SK-N-SH (cell line): ENCODE measurements at regions of chr2 and their contacts with region 1.

Region 1: GRCh38 chr2:101831351-101831865 is 133.9 kb downstream of the MAP4K4 start:
- DNase-seq: peak; percentile 54
- H3K4me3 ChIP-seq: no peak overlapping the region; a peak in 1 of 4 replicates
- H3K27ac ChIP-seq: peak overlapping the region; percentile 65 to 77
- H3K4me1 ChIP-seq: peaks cover 11 to 21% of the 10 kb centered on the region in 2 experiments
- H3K27me3 ChIP-seq: no peaks in the 10 kb centered on the region
- CTCF ChIP-seq: peak; percentile 84
- EP300 ChIP-seq: no peak
- RAD21 ChIP-seq: peak; percentile 81

Region 2: DNA sequence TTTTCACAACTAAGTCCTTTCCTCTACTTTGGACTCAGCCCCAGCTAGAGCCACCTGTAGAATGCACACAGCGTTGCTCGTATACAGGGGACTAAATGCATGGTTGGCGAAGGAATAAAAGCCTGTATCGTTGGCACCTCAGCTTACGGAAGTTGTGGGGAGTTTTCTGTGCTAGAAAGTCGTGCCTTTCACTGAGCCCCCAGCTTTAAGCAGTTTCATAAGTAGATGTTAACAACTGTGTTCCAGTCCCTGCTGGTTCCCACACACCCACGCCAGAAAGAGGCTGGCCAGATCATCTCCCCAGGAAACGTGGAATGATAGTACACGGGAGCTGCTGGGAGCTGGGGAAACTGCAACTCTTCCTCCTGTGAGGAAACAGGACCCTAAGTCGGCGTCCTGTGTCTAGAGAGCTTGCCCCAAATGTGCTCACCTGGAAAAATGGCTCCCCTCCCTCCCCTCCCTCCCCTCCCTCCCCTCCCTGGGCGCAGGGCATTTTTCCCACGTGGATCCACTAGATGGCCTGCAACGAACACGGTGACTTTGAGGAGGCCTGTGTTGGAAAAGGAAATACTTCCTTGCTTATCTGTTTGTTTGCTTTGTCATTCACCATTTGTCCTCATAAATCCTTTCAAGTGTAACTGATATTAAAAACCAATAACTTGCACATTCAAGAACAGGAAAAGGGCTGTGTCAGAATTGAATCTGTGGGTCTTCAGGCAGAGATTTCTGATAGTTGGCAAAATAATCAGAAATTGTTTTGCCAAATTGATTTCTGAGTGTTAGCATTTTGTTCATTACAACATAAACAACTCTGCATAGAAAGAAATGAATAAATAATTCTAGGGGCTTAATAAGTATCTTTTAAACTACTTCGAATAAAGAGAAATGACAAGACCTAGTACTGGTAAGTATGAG is 312.6 kb before region 1 on chr2:
- CTCF ChIA-PET with region 1: interaction called, 21 read pairs
- POLR2A ChIA-PET with region 1: no interaction called
- DNase-seq: peak; percentile 59
- H3K4me3 ChIP-seq: no peak overlapping the region
- H3K27ac ChIP-seq: peak overlapping the region in 1 of 2 experiments; percentile 96; a peak in 2 of 4 replicates
- H3K4me1 ChIP-seq: peaks cover 9 to 43% of the 10 kb centered on the region in 2 experiments; a peak in 3 of 4 replicates
- H3K27me3 ChIP-seq: no peaks in the 10 kb centered on the region
- CTCF ChIP-seq: peak; percentile 46
- EP300 ChIP-seq: peak in 1 of 2 experiments; percentile 22; a peak in 1 of 4 replicates
- RAD21 ChIP-seq: peak; percentile 78

Region 3: GRCh38 chr2:101770726-101771125 is 60.7 kb before region 1 on chr2:
- CTCF ChIA-PET with region 1: interaction called, 53 read pairs
- POLR2A ChIA-PET with region 1: no interaction called
- DNase-seq: peak; percentile 41
- H3K4me3 ChIP-seq: no peak overlapping the region
- H3K27ac ChIP-seq: peak overlapping the region; percentile 8 to 19; a peak in 2 of 4 replicates
- H3K4me1 ChIP-seq: peaks cover 26 to 56% of the 10 kb centered on the region in 2 experiments
- H3K27me3 ChIP-seq: no peaks in the 10 kb centered on the region
- CTCF ChIP-seq: peak; percentile 57
- EP300 ChIP-seq: no peak
- RAD21 ChIP-seq: peak; percentile 57

Region 4: DNA sequence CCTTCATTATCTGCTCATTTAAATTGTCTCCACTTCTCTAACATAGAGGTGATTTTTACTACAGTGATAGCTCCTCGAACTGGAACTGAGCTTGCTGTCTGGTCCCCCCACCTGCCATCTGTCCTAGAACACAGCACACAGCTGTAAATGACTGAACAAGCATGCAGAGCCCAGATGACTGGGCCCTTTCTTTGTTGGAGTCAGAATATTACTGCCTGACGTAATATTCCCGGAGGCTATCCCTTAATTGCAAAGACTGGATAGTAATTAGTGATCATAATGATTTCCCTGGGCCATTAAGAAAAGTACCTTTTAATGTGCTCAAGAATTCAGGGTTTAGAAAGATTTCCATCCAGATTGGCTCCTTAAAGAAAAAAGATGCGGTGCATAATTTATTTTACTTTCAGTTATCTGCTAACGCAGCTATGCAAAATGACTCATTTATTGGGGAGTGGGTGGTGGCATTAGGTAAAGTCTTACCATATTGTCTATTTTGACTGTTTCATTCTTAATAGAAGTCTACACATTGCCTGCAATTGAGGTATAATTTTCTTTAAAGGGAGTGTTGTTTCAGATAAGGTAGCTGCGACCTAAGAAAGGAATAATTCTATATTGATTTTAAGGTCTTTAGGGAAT is 49.5 kb before region 1 on chr2:
- CTCF ChIA-PET with region 1: interaction called, 12 read pairs
- POLR2A ChIA-PET with region 1: no interaction called
- DNase-seq: no peak
- H3K4me3 ChIP-seq: no peak overlapping the region
- H3K27ac ChIP-seq: peak overlapping the region in 1 of 2 experiments; percentile 40; a peak in 1 of 4 replicates
- H3K4me1 ChIP-seq: peaks cover 24 to 26% of the 10 kb centered on the region in 2 experiments
- H3K27me3 ChIP-seq: no peaks in the 10 kb centered on the region
- CTCF ChIP-seq: no peak
- EP300 ChIP-seq: no peak
- RAD21 ChIP-seq: no peak

Region 5: GRCh38 chr2:101802329-101802728 is 29.1 kb before region 1 on chr2:
- CTCF ChIA-PET with region 1: interaction called, 16 read pairs
- POLR2A ChIA-PET with region 1: no interaction called
- DNase-seq: no peak
- H3K4me3 ChIP-seq: no peak overlapping the region
- H3K27ac ChIP-seq: no peak overlapping the region; a peak in 1 of 4 replicates
- H3K4me1 ChIP-seq: peaks cover 41 to 48% of the 10 kb centered on the region in 2 experiments
- H3K27me3 ChIP-seq: no peaks in the 10 kb centered on the region
- CTCF ChIP-seq: no peak
- EP300 ChIP-seq: no peak
- RAD21 ChIP-seq: no peak

Region 6: GRCh38 chr2:101818531-101819451 is 12.6 kb before region 1 on chr2:
- CTCF ChIA-PET with region 1: interaction called, 37 read pairs
- POLR2A ChIA-PET with region 1: no interaction called
- DNase-seq: no peak
- H3K4me3 ChIP-seq: no peak overlapping the region
- H3K27ac ChIP-seq: peak overlapping the region; percentile 69 to 78
- H3K4me1 ChIP-seq: peaks cover 38 to 56% of the 10 kb centered on the region in 2 experiments
- H3K27me3 ChIP-seq: no peaks in the 10 kb centered on the region
- CTCF ChIP-seq: no peak
- EP300 ChIP-seq: no peak
- RAD21 ChIP-seq: no peak

Region 7: GRCh38 chr2:101848769-101849410 is 17.5 kb after region 1 on chr2:
- CTCF ChIA-PET with region 1: interaction called, 20 read pairs
- POLR2A ChIA-PET with region 1: no interaction called
- DNase-seq: no peak
- H3K4me3 ChIP-seq: no peak overlapping the region
- H3K27ac ChIP-seq: no peak overlapping the region
- H3K4me1 ChIP-seq: peaks cover 3% of the 10 kb centered on the region in 2 experiments; a peak in 1 of 4 replicates
- H3K27me3 ChIP-seq: no peaks in the 10 kb centered on the region
- CTCF ChIP-seq: no peak
- EP300 ChIP-seq: no peak
- RAD21 ChIP-seq: no peak